MCF 10A (cell line): ENCODE measurements at regions of chr17 and their contacts with region 1.

Region 1: GRCh38 chr17:33674685-33675084 is 381.6 kb upstream of the ASIC2 start:
- DNase-seq: peak; percentile 33
- H3K4me3 Mint-ChIP-seq: no peak overlapping the region
- H3K27ac Mint-ChIP-seq: no peak overlapping the region
- H3K4me1 Mint-ChIP-seq: no peaks in the 10 kb centered on the region
- H3K27me3 Mint-ChIP-seq: no peaks in the 10 kb centered on the region
- CTCF ChIP-seq: peak; percentile 61

Region 2: GRCh38 chr17:33028778-33029177 is 645.9 kb before region 1 on chr17:
- CTCF ChIA-PET with region 1: interaction called, 4 read pairs
- POLR2A ChIA-PET with region 1: no interaction called
- intact Hi-C with region 1: loop called (anchors 2 kb)
- DNase-seq: no peak
- H3K4me3 Mint-ChIP-seq: no peak overlapping the region
- H3K27ac Mint-ChIP-seq: no peak overlapping the region
- H3K4me1 Mint-ChIP-seq: no peaks in the 10 kb centered on the region
- H3K27me3 Mint-ChIP-seq: peaks cover 22% of the 10 kb centered on the region
- CTCF ChIP-seq: no peak

Region 3: GRCh38 chr17:33038740-33039139 is 635.9 kb before region 1 on chr17:
- CTCF ChIA-PET with region 1: interaction called, 4 read pairs
- POLR2A ChIA-PET with region 1: no interaction called
- intact Hi-C with region 1: loop called (anchors 1 kb)
- DNase-seq: peak; percentile 65
- H3K4me3 Mint-ChIP-seq: no peak overlapping the region
- H3K27ac Mint-ChIP-seq: no peak overlapping the region
- H3K4me1 Mint-ChIP-seq: peaks cover 36% of the 10 kb centered on the region
- H3K27me3 Mint-ChIP-seq: no peaks in the 10 kb centered on the region
- CTCF ChIP-seq: peak; percentile 70

Region 4: DNA sequence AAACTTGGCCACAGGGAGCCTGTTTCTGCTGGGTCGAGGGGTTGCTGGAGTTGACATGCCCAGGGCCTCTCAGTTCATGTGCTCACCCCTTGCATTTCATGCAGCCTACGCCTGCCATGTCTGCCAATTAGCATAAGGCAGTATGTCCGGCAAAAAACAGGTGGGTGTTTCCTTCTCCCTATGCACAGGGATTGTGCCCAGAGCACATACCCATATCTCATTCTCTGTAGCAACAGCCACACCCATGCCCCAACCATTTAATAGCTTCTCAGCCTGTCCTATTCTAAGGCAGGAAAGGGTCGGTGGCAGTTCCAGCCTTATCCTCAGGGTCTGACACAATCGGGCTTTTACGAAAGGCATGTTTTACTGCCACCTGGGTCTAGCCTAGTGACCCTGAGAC is 41.2 kb before region 1 on chr17:
- CTCF ChIA-PET with region 1: interaction called, 19 read pairs
- POLR2A ChIA-PET with region 1: no interaction called
- intact Hi-C with region 1: no loop called
- DNase-seq: no peak
- H3K4me3 Mint-ChIP-seq: no peak overlapping the region
- H3K27ac Mint-ChIP-seq: no peak overlapping the region
- H3K4me1 Mint-ChIP-seq: no peaks in the 10 kb centered on the region
- H3K27me3 Mint-ChIP-seq: no peaks in the 10 kb centered on the region
- CTCF ChIP-seq: no peak

Region 5: DNA sequence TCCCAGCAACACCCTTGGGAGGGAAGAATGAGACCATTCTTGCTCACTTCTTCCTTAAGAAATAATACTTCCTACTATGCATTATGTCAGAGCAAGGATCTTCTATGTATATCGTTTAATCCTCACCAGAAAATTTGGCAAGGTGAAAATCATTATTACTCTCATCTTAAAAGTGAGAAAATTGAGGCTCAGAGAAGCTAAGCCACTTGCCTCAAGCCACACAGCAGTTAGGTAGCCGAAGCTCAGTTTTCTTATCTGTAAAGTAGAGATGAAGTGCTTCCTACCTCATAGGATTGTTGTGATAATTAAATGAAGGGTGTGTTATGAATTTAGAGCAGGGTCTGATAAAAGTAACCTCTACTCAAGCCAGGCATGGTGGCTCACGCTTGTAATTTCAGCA is 12.7 kb before region 1 on chr17:
- CTCF ChIA-PET with region 1: interaction called, 12 read pairs
- POLR2A ChIA-PET with region 1: interaction called, 3 read pairs
- intact Hi-C with region 1: no loop called
- DNase-seq: no peak
- H3K4me3 Mint-ChIP-seq: no peak overlapping the region
- H3K27ac Mint-ChIP-seq: no peak overlapping the region
- H3K4me1 Mint-ChIP-seq: no peaks in the 10 kb centered on the region
- H3K27me3 Mint-ChIP-seq: no peaks in the 10 kb centered on the region
- CTCF ChIP-seq: no peak

Region 6: GRCh38 chr17:33686171-33686570 is 11.5 kb after region 1 on chr17:
- CTCF ChIA-PET with region 1: interaction called, 26 read pairs
- POLR2A ChIA-PET with region 1: interaction called, 3 read pairs
- intact Hi-C with region 1: no loop called
- DNase-seq: no peak
- H3K4me3 Mint-ChIP-seq: no peak overlapping the region
- H3K27ac Mint-ChIP-seq: no peak overlapping the region
- H3K4me1 Mint-ChIP-seq: no peaks in the 10 kb centered on the region
- H3K27me3 Mint-ChIP-seq: no peaks in the 10 kb centered on the region
- CTCF ChIP-seq: no peak

Region 7: GRCh38 chr17:33779225-33779591 is 104.5 kb after region 1 on chr17:
- CTCF ChIA-PET with region 1: no interaction called
- POLR2A ChIA-PET with region 1: no interaction called
- intact Hi-C with region 1: no loop called
- DNase-seq: peak; percentile 30
- H3K4me3 Mint-ChIP-seq: no peak overlapping the region
- H3K27ac Mint-ChIP-seq: no peak overlapping the region
- H3K4me1 Mint-ChIP-seq: no peaks in the 10 kb centered on the region
- H3K27me3 Mint-ChIP-seq: no peaks in the 10 kb centered on the region
- CTCF ChIP-seq: peak; percentile 81